ENCODE measurements at regions of chr6 and their contacts with region 1.

Region 1: DNA sequence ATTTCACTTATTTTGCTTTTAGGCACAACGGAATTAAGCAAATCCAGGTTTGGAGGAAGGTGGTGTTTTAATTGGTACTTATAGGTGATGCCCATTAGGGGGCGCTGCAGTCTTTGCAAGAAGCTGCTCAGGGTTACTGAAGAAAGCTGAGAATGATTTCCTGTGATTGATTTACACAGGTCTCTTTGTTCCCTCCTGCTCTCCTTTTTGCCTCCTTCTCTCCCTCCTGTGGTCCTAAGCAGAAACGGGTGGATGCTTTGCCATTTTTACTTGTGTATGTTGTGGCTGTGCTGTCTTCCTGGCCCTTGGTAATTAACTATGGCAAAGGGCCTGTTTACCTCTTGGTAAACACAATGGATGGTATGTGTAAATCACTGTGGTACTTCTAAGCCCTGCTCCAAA is 97.8 kb downstream of the ANKS1A start:
- DNase-seq: peak; percentile 76 to 89 (median 88)
- H3K4me3 ChIP-seq: no peak overlapping the region
- H3K27ac ChIP-seq: no peak overlapping the region
- H3K4me1 ChIP-seq: peaks cover 0 to 6% (median 5%) of the 10 kb centered on the region in 4 experiments
- H3K27me3 ChIP-seq: no peaks in the 10 kb centered on the region

Region 2: GRCh38 chr6:35048631-35049083 is 61.8 kb after region 1 on chr6:
- CTCF ChIA-PET with region 1: interaction called, 11 read pairs
- POLR2A ChIA-PET with region 1: no interaction called
- DNase-seq: peak; percentile 48 to 87 (median 80)
- H3K4me3 ChIP-seq: peak overlapping the region in 2 of 7 experiments; percentile 4 to 16
- H3K27ac ChIP-seq: peak overlapping the region; percentile 64 to 80
- H3K4me1 ChIP-seq: peaks cover 54 to 97% (median 92%) of the 10 kb centered on the region in 4 experiments
- H3K27me3 ChIP-seq: no peaks in the 10 kb centered on the region

Region 3: GRCh38 chr6:35139908-35140655 is 153.2 kb after region 1 on chr6:
- CTCF ChIA-PET with region 1: interaction called, 95 read pairs
- POLR2A ChIA-PET with region 1: interaction called, 3 read pairs
- DNase-seq: peak; percentile 81 to 88 (median 83)
- H3K4me3 ChIP-seq: no peak overlapping the region
- H3K27ac ChIP-seq: no peak overlapping the region
- H3K4me1 ChIP-seq: peaks cover 0 to 21% (median 13%) of the 10 kb centered on the region in 4 experiments
- H3K27me3 ChIP-seq: no peaks in the 10 kb centered on the region

Region 4: GRCh38 chr6:35168461-35168861 is 181.6 kb after region 1 on chr6:
- CTCF ChIA-PET with region 1: no interaction called
- POLR2A ChIA-PET with region 1: no interaction called
- DNase-seq: no peak
- H3K4me3 ChIP-seq: no peak overlapping the region
- H3K27ac ChIP-seq: no peak overlapping the region
- H3K4me1 ChIP-seq: no peaks in the 10 kb centered on the region
- H3K27me3 ChIP-seq: peaks cover 0 to 5% (median 0%) of the 10 kb centered on the region in 5 experiments

Measured in common myeloid progenitor, CD34-positive (primary cell).